Esophagus muscularis mucosa (tissue), 4 donors: ENCODE measurements at regions of chr11 and their contacts with region 1.

Region 1: GRCh38 chr11:111841370-111842053 is 29.9 kb downstream of the ALG9 start:
- DNase-seq: peak; percentile 96
- H3K4me3 ChIP-seq: no peak overlapping the region
- H3K27ac ChIP-seq: peak overlapping the region in 1 of 4 donors; percentile 23
- H3K4me1 ChIP-seq: peaks cover 0 to 18% (median 7%) of the 10 kb centered on the region in 4 donors
- H3K27me3 ChIP-seq: no peaks in the 10 kb centered on the region
- CTCF ChIP-seq: peak; percentile 85 to 96 (median 87)
- EP300 ChIP-seq: no peak
- POLR2A ChIP-seq: no peak

Region 2: GRCh38 chr11:111565114-111565720 is 276.3 kb before region 1 on chr11:
- intact Hi-C with region 1: loop called (anchors 1 kb)
- DNase-seq: no peak
- H3K4me3 ChIP-seq: no peak overlapping the region
- H3K27ac ChIP-seq: no peak overlapping the region
- H3K4me1 ChIP-seq: no peaks in the 10 kb centered on the region
- H3K27me3 ChIP-seq: no peaks in the 10 kb centered on the region
- CTCF ChIP-seq: peak; percentile 87 to 95 (median 92)
- EP300 ChIP-seq: no peak
- POLR2A ChIP-seq: no peak

Region 3: GRCh38 chr11:111586388-111586831 is 255.1 kb before region 1 on chr11:
- intact Hi-C with region 1: loop called (anchors 5 kb)
- DNase-seq: no peak
- H3K4me3 ChIP-seq: no peak overlapping the region
- H3K27ac ChIP-seq: no peak overlapping the region
- H3K4me1 ChIP-seq: peaks cover 0 to 26% (median 22%) of the 10 kb centered on the region in 4 donors
- H3K27me3 ChIP-seq: no peaks in the 10 kb centered on the region
- CTCF ChIP-seq: peak; percentile 47 to 61 (median 57)
- EP300 ChIP-seq: no peak
- POLR2A ChIP-seq: no peak

Region 4: GRCh38 chr11:111601979-111602864 is 239.3 kb before region 1 on chr11 and contains the start of gene SIK2:
- intact Hi-C with region 1: loop called (anchors 5 kb)
- DNase-seq: peak; percentile 96
- H3K4me3 ChIP-seq: peak within 1 kb of the TSS; percentile 77 to 94 (median 88)
- H3K27ac ChIP-seq: peak within 1 kb of the TSS; percentile 92 to 99 (median 97)
- H3K4me1 ChIP-seq: peaks cover 19 to 56% (median 47%) of the 10 kb centered on the region in 4 donors
- H3K27me3 ChIP-seq: no peaks in the 10 kb centered on the region
- CTCF ChIP-seq: peak; percentile 92 to 97 (median 97)
- EP300 ChIP-seq: no peak
- POLR2A ChIP-seq: no peak
- total RNA-seq, gene SIK2: 14.5 to 22.1 (median 17.4) TPM

Region 5: GRCh38 chr11:111777094-111778046 is 64.1 kb before region 1 on chr11:
- intact Hi-C with region 1: loop called (anchors 5 kb)
- DNase-seq: no peak
- H3K4me3 ChIP-seq: no peak overlapping the region
- H3K27ac ChIP-seq: peak overlapping the region in 1 of 4 donors; percentile 13
- H3K4me1 ChIP-seq: peaks cover 6 to 14% (median 10%) of the 10 kb centered on the region in 4 donors
- H3K27me3 ChIP-seq: no peaks in the 10 kb centered on the region
- CTCF ChIP-seq: peak; percentile 75 to 85 (median 75)
- EP300 ChIP-seq: no peak
- POLR2A ChIP-seq: no peak